Upper lobe of right lung (tissue), 1 donor: ENCODE measurements at regions of chr5 and their contacts with region 1.

Region 1: GRCh38 chr5:149837680-149838269 is 106.8 kb downstream of the PDE6A start:
- DNase-seq: no peak
- ATAC-seq: peak; percentile 65
- H3K4me3 ChIP-seq: no peak overlapping the region
- H3K27ac ChIP-seq: no peak overlapping the region
- H3K4me1 ChIP-seq: no peaks in the 10 kb centered on the region
- H3K27me3 ChIP-seq: no peaks in the 10 kb centered on the region
- CTCF ChIP-seq: peak; percentile 61

Region 2: GRCh38 chr5:149988126-149988525 is 150.4 kb after region 1 on chr5:
- intact Hi-C with region 1: loop called (anchors 5 kb)
- DNase-seq: no peak
- ATAC-seq: no peak
- H3K4me3 ChIP-seq: no peak overlapping the region
- H3K27ac ChIP-seq: no peak overlapping the region
- H3K4me1 ChIP-seq: no peaks in the 10 kb centered on the region
- H3K27me3 ChIP-seq: no peaks in the 10 kb centered on the region
- CTCF ChIP-seq: no peak